ENCODE measurements at regions of chr9 and their contacts with region 1.

Region 1: GRCh38 chr9:20684035-20684872 is at the start of gene FOCAD:
- DNase-seq: peak; percentile 94 to 99 (median 96)
- ATAC-seq: peak; percentile 99
- H3K4me3 ChIP-seq: peak within 1 kb of the TSS; percentile 95
- H3K4me3 Mint-ChIP-seq: peak within 1 kb of the TSS; percentile 89 to 98 (median 96)
- H3K27ac ChIP-seq: peak within 1 kb of the TSS; percentile 81
- H3K27ac Mint-ChIP-seq: peak within 1 kb of the TSS; percentile 78 to 96 (median 92)
- H3K4me1 ChIP-seq: peaks cover 0 to 6% of the 10 kb centered on the region in 2 donors
- H3K4me1 Mint-ChIP-seq: peaks cover 11 to 29% (median 24%) of the 10 kb centered on the region in 7 donors
- H3K27me3 ChIP-seq: no peaks in the 10 kb centered on the region
- H3K27me3 Mint-ChIP-seq: no peaks in the 10 kb centered on the region
- total RNA-seq, gene FOCAD: 12.8 to 33.7 (median 22.3) TPM

Region 2: GRCh38 chr9:20043035-20043434 is 641.2 kb before region 1 on chr9:
- CTCF ChIA-PET with region 1: no interaction called
- POLR2A ChIA-PET with region 1: no interaction called
- intact Hi-C with region 1: loop called in 1 of 2 experiments (anchors 5 kb)
- DNase-seq: peak in 6 of 9 donors; percentile 6 to 46 (median 34)
- ATAC-seq: peak; percentile 59
- H3K4me3 ChIP-seq: peak overlapping the region; percentile 28
- H3K4me3 Mint-ChIP-seq: peak overlapping the region; percentile 61 to 85 (median 80)
- H3K27ac ChIP-seq: peak overlapping the region; percentile 17
- H3K27ac Mint-ChIP-seq: peak overlapping the region; percentile 84 to 95 (median 91)
- H3K4me1 ChIP-seq: peaks cover 0 to 12% of the 10 kb centered on the region in 2 donors
- H3K4me1 Mint-ChIP-seq: peaks cover 9 to 43% (median 27%) of the 10 kb centered on the region in 7 donors
- H3K27me3 ChIP-seq: no peaks in the 10 kb centered on the region
- H3K27me3 Mint-ChIP-seq: no peaks in the 10 kb centered on the region

Region 3: GRCh38 chr9:20552874-20553575 is 131.2 kb before region 1 on chr9:
- CTCF ChIA-PET with region 1: no interaction called
- POLR2A ChIA-PET with region 1: no interaction called
- intact Hi-C with region 1: loop called in 1 of 2 experiments (anchors 5 kb)
- DNase-seq: peak in 1 of 9 donors; percentile 28
- ATAC-seq: no peak
- H3K4me3 ChIP-seq: no peak overlapping the region
- H3K4me3 Mint-ChIP-seq: peak overlapping the region; percentile 27 to 84 (median 46)
- H3K27ac ChIP-seq: no peak overlapping the region
- H3K27ac Mint-ChIP-seq: peak overlapping the region; percentile 2 to 79 (median 54)
- H3K4me1 ChIP-seq: peaks cover 23 to 33% of the 10 kb centered on the region in 2 donors
- H3K4me1 Mint-ChIP-seq: peaks cover 58 to 86% (median 79%) of the 10 kb centered on the region in 7 donors
- H3K27me3 ChIP-seq: no peaks in the 10 kb centered on the region
- H3K27me3 Mint-ChIP-seq: no peaks in the 10 kb centered on the region

Region 4: GRCh38 chr9:20658677-20659473 is 25.4 kb before region 1 on chr9:
- CTCF ChIA-PET with region 1: interaction called, 3 read pairs
- POLR2A ChIA-PET with region 1: interaction called, 12 read pairs
- intact Hi-C with region 1: loop called in 1 of 2 experiments (anchors 1 kb)
- DNase-seq: no peak
- ATAC-seq: peak; percentile 20
- H3K4me3 ChIP-seq: peak overlapping the region; percentile 27
- H3K4me3 Mint-ChIP-seq: peak overlapping the region in 1 of 10 donors; percentile 85
- H3K27ac ChIP-seq: no peak overlapping the region
- H3K27ac Mint-ChIP-seq: peak overlapping the region in 8 of 9 donors; percentile 69 to 94 (median 84)
- H3K4me1 ChIP-seq: peaks cover 0 to 5% of the 10 kb centered on the region in 2 donors
- H3K4me1 Mint-ChIP-seq: peaks cover 0 to 24% (median 14%) of the 10 kb centered on the region in 7 donors
- H3K27me3 ChIP-seq: no peaks in the 10 kb centered on the region
- H3K27me3 Mint-ChIP-seq: peaks cover 0 to 2% (median 0%) of the 10 kb centered on the region in 5 donors

Region 5: GRCh38 chr9:21802195-21803000 is 1118.1 kb after region 1 on chr9 and contains the start of gene MTAP:
- CTCF ChIA-PET with region 1: no interaction called
- POLR2A ChIA-PET with region 1: no interaction called
- intact Hi-C with region 1: loop called in 1 of 2 experiments (anchors 2 kb)
- DNase-seq: peak in 7 of 9 donors; percentile 46 to 81 (median 72)
- ATAC-seq: peak; percentile 88
- H3K4me3 ChIP-seq: peak within 1 kb of the TSS; percentile 92
- H3K4me3 Mint-ChIP-seq: peak within 1 kb of the TSS; percentile 96 to 100 (median 99)
- H3K27ac ChIP-seq: peak within 1 kb of the TSS; percentile 69
- H3K27ac Mint-ChIP-seq: peak within 1 kb of the TSS; percentile 92 to 99 (median 96)
- H3K4me1 ChIP-seq: peaks cover 10 to 25% of the 10 kb centered on the region in 2 donors
- H3K4me1 Mint-ChIP-seq: peaks cover 24 to 52% (median 40%) of the 10 kb centered on the region in 7 donors
- H3K27me3 ChIP-seq: peaks cover 0 to 4% of the 10 kb centered on the region in 2 donors
- H3K27me3 Mint-ChIP-seq: peaks cover 0 to 46% (median 8%) of the 10 kb centered on the region in 5 donors
- total RNA-seq, gene MTAP: 29.0 to 50.7 (median 43.2) TPM

Measured in naive thymus-derived CD4-positive, alpha-beta T cell (primary cell).